Adrenal gland (tissue), 19 donors: ENCODE measurements at regions of chr12 and their contacts with region 1.

Region 1: GRCh38 chr12:111451649-111452129 is 46.0 kb downstream of the SH2B3 start:
- DNase-seq: peak in 4 of 7 donors; percentile 10 to 53 (median 16)
- H3K4me3 ChIP-seq: no peak overlapping the region
- H3K27ac ChIP-seq: no peak overlapping the region
- H3K4me1 ChIP-seq: peaks cover 11 to 43% of the 10 kb centered on the region in 2 donors
- H3K27me3 ChIP-seq: no peaks in the 10 kb centered on the region
- CTCF ChIP-seq: peak; percentile 73 to 92 (median 82)
- POLR2A ChIP-seq: no peak

Region 2: GRCh38 chr12:111405149-111405860 is 46.4 kb before region 1 on chr12:
- intact Hi-C with region 1: loop called (anchors 5 kb)
- DNase-seq: peak; percentile 94 to 99 (median 96)
- H3K4me3 ChIP-seq: peak overlapping the region in 2 of 4 donors; percentile 70 to 87
- H3K27ac ChIP-seq: peak overlapping the region in 4 of 5 donors; percentile 36 to 97 (median 62)
- H3K4me1 ChIP-seq: peaks cover 0 to 50% of the 10 kb centered on the region in 2 donors
- H3K27me3 ChIP-seq: no peaks in the 10 kb centered on the region
- CTCF ChIP-seq: peak; percentile 39 to 63 (median 53)
- POLR2A ChIP-seq: no peak

Region 3: DNA sequence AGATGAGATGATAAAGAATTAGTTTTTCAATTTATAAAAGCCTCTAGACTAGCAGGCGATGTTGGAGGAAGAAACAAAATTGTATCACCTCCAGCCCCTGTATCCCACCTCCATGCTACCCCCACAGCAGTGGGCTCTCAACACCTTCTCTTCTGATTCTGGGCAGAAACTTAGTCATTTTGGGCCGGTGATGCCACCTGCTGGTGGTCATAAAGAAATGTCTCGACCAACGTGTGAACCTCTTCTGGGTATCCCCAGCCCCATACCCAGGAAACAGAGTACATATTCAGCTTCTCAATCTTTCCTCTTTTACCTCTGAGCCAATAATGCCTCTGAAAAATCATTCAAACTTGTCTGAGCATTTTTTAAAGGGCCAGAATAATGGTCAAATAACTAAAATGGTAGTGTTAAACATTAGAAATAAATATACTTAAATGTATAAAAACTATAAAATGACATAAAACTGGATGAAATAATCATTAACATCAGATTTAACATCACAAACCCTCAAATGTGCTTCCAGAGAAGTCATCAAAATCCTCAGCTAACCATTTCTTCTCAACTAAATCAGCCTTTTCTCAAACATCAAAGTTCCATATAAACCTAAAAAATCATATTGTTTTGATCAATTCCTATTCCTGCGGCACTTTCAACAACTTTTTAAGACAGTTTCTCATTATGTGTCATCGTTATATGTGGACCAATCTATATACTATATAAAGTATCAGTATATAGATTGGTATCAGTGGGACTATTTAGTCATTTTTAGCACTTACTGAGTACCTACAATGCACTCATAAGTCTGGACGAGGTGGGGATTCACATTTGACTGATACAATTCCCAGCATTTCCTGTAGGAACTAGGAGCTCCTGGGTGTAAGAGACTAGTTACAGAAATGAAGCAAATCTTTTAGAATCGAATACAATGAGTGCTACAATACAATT is 78.0 kb after region 1 on chr12:
- intact Hi-C with region 1: loop called in 1 of 2 experiments (anchors 10 kb)
- DNase-seq: peak in 6 of 7 donors; percentile 30 to 60 (median 46)
- H3K4me3 ChIP-seq: no peak overlapping the region
- H3K27ac ChIP-seq: no peak overlapping the region
- H3K4me1 ChIP-seq: no peaks in the 10 kb centered on the region
- H3K27me3 ChIP-seq: no peaks in the 10 kb centered on the region
- CTCF ChIP-seq: peak; percentile 51 to 71 (median 63)
- POLR2A ChIP-seq: no peak